ENCODE measurements at regions of chr2 and their contacts with region 1.

Region 1: DNA sequence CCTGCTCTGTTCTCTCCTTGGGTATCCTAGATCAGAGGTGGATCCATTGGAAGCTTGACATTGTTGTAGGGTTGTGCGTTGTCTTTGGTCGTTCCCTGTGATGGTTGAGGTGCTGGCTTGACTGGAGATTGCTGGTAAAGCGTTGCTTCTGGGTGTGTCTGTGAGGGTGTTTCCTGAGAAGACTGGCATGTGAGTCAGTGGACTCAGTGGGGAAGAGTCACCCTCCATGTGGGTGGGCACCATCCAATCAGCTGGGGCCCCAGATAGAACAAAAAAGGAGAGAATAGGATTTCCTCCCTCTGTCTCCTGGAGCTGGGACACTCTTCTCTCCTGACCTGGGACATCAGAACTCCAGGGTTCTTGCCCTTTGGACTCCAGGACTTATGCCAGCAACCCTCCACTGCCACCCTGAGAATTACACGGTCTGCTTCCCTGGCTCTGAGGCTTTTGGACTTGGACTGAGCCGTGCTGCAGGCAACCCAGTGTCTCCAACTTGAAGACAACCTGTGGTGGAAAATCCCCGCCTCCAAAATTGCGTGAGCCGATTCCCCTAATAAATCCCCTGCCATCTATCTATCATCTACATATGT is 14.8 kb upstream of the REEP1 start:
- DNase-seq: no peak
- H3K4me3 ChIP-seq: no peak overlapping the region
- H3K27ac ChIP-seq: no peak overlapping the region
- H3K4me1 ChIP-seq: no peaks in the 10 kb centered on the region
- CTCF ChIP-seq: no peak

Region 2: DNA sequence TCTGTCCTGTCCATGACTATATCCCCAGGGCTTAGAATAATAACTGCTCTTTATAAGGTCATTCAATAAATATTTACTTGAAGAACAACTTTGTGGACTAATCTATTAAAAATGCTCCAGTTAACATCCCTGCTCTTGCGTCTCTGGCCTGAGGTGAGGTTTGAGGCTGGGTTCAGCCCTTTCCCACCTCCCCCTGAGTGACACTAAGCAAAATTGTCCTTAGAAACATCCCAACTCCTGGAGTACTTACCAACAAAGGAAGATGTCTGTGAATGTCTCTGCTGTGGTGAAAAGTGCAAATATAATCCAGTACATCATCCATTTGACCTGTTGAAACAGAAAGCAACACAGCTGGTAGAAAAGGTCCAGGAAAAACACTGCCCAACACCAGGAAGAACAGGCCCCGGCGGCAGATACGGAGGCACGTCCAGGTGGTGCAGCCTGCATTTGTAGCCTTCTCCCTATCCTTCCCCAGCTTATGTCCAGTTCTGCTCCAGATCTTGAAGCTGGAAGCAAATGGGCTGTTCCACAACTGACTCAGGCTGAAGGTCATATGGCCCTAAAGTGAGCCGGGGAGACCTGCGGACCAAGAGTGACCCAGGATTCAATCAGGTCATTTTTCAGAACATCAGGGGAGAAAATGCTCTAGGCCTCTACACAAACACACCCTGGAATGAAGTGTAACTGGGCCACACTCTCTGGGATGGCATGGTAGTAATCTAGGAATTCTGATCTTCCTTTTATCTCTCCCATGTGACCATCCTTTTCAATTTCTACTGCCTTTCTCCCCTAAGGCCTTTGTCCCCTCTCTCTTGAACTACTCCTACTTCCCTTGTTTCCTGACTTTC is 88.3 kb before region 1 on chr2:
- CTCF ChIA-PET with region 1: no interaction called
- POLR2A ChIA-PET with region 1: no interaction called
- intact Hi-C with region 1: no loop called
- DNase-seq: no peak
- H3K4me3 ChIP-seq: no peak overlapping the region
- H3K27ac ChIP-seq: no peak overlapping the region
- H3K4me1 ChIP-seq: no peaks in the 10 kb centered on the region
- CTCF ChIP-seq: no peak

Region 3: DNA sequence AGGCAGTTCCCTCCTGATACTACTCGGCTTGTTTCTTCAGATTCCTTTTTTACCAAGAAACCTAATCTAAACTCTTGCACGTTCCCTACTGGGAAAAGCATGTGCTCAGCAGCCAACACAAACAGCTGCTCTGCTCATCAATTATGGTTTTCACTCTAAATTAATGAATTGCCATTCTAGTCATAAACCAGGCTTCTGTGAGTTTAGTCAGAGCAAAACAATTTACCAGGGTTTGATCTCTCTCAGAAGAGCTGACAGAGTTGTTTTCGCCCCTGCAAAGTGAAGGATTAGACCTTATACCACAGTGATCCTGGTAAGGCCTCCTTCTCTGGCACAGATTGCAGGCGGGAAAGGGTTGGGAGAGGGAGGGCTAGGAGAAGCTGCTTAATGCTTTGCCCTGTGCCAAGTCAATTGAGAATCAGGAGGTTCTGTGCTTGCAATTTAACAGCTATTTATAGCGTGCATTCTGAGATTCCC is 72.0 kb before region 1 on chr2:
- CTCF ChIA-PET with region 1: no interaction called
- POLR2A ChIA-PET with region 1: no interaction called
- intact Hi-C with region 1: no loop called
- DNase-seq: no peak
- H3K4me3 ChIP-seq: no peak overlapping the region
- H3K27ac ChIP-seq: no peak overlapping the region
- H3K4me1 ChIP-seq: no peaks in the 10 kb centered on the region
- CTCF ChIP-seq: no peak

Region 4: GRCh38 chr2:86290596-86291327 is 61.5 kb before region 1 on chr2:
- CTCF ChIA-PET with region 1: no interaction called
- POLR2A ChIA-PET with region 1: no interaction called
- intact Hi-C with region 1: loop called (anchors 5 kb)
- DNase-seq: no peak
- H3K4me3 ChIP-seq: no peak overlapping the region
- H3K27ac ChIP-seq: no peak overlapping the region
- H3K4me1 ChIP-seq: no peaks in the 10 kb centered on the region
- CTCF ChIP-seq: no peak

Measured in OCI-LY7 (cell line).